ENCODE measurements at regions of chr3 and their contacts with region 1.

Region 1: DNA sequence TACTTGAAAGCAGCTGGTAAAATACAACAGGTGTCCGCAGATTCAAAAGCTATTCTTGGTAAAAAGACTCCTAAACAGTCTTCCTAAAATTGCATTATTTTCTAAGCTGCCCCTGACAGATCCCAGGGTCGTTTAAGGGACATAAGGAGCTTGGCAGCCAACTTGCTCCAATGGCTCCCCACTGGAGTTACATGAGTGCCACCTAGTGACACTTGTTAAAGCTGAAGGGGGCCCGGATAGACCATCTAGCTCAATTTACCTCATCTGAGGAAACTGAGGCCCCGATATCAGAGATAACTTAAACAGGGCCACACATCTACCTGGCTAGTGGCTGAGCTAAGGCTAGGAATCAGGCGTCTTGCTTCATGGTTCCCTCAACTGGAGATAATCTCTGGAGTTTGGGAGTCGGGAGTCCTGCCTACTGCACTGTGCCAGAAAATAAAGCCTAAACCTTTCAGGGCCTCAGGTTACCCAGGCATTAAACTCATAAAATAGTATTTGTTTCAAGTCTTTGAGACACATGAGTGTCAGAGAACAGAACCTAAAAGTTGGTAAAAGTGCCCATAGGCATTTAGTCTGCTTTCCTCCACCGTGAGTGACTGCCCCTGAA is 6.5 kb upstream of the TBC1D23 start:
- DNase-seq: peak; percentile 33 to 63
- ATAC-seq: peak; percentile 85 to 93
- H3K4me3 ChIP-seq: no peak overlapping the region
- H3K27ac ChIP-seq: peak overlapping the region; percentile 28 to 66 (median 64)
- H3K4me1 ChIP-seq: peaks cover 23 to 26% of the 10 kb centered on the region in 2 donors
- H3K27me3 ChIP-seq: no peaks in the 10 kb centered on the region
- CTCF ChIP-seq: peak; percentile 75 to 90 (median 87)
- POLR2A ChIP-seq: no peak

Region 2: GRCh38 chr3:99808151-99808794 is 446.0 kb before region 1 on chr3:
- in situ Hi-C with region 1: no loop called
- intact Hi-C with region 1: no loop called
- DNase-seq: peak in 1 of 2 donors; percentile 30
- ATAC-seq: peak; percentile 52 to 78
- H3K4me3 ChIP-seq: no peak overlapping the region
- H3K27ac ChIP-seq: no peak overlapping the region
- H3K4me1 ChIP-seq: peaks cover 5 to 7% of the 10 kb centered on the region in 2 donors
- H3K27me3 ChIP-seq: no peaks in the 10 kb centered on the region
- CTCF ChIP-seq: peak; percentile 40 to 80 (median 59)
- POLR2A ChIP-seq: no peak

Region 3: DNA sequence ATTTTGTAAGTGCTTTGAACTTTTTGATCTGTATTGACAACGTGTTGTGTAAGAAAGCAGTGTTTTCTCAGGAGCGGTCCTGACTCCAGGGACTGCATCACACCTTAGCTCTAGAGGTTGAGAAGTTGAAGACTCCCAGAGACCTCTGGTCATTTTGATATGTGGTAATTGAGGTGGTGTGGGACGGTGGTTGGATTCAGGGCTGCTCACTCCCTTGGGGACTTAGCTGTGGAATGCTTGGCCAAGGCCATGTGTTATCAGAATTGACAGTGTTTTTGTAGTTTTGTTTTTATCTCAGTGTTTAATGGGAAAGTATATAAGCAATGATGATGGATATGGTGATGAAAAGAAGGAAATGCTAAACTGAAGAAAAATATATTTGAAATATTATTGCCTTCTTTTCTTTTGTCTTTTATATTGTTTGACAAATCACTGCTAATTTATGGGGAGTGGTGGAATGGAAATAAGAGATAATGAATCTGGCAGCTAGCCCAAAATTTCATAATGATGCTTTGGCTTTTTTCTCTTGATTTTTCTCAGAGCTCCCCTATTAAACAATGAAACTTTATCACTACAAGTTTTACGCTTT is 420.6 kb before region 1 on chr3:
- in situ Hi-C with region 1: loop called in 2 of 4 experiments (anchors 5 kb)
- intact Hi-C with region 1: no loop called
- DNase-seq: no peak
- ATAC-seq: no peak
- H3K4me3 ChIP-seq: no peak overlapping the region
- H3K27ac ChIP-seq: peak overlapping the region; percentile 4 to 66 (median 48)
- H3K4me1 ChIP-seq: peaks cover 7 to 12% of the 10 kb centered on the region in 2 donors
- H3K27me3 ChIP-seq: no peaks in the 10 kb centered on the region
- CTCF ChIP-seq: no peak
- POLR2A ChIP-seq: no peak

Region 4: GRCh38 chr3:99981138-99981537 is 273.1 kb before region 1 on chr3:
- in situ Hi-C with region 1: no loop called
- intact Hi-C with region 1: no loop called
- DNase-seq: no peak
- ATAC-seq: no peak
- H3K4me3 ChIP-seq: no peak overlapping the region
- H3K27ac ChIP-seq: peak overlapping the region; percentile 35 to 66 (median 51)
- H3K4me1 ChIP-seq: peaks cover 18 to 20% of the 10 kb centered on the region in 2 donors
- H3K27me3 ChIP-seq: no peaks in the 10 kb centered on the region
- CTCF ChIP-seq: no peak
- POLR2A ChIP-seq: no peak

Region 5: GRCh38 chr3:100068826-100069225 is 185.4 kb before region 1 on chr3:
- in situ Hi-C with region 1: loop called (anchors 5 to 10 kb)
- intact Hi-C with region 1: loop called (anchors 1 kb)
- DNase-seq: peak; percentile 72 to 79
- ATAC-seq: peak; percentile 86 to 89
- H3K4me3 ChIP-seq: peak overlapping the region in 1 of 4 donors; percentile 19
- H3K27ac ChIP-seq: peak overlapping the region; percentile 63 to 80 (median 74)
- H3K4me1 ChIP-seq: peaks cover 44 to 61% of the 10 kb centered on the region in 2 donors
- H3K27me3 ChIP-seq: no peaks in the 10 kb centered on the region
- CTCF ChIP-seq: peak; percentile 67 to 86 (median 78)
- POLR2A ChIP-seq: no peak

Region 6: GRCh38 chr3:100073899-100074307 is 180.4 kb before region 1 on chr3:
- in situ Hi-C with region 1: loop called (anchors 5 to 10 kb)
- intact Hi-C with region 1: loop called (anchors 1 kb)
- DNase-seq: no peak
- ATAC-seq: no peak
- H3K4me3 ChIP-seq: no peak overlapping the region
- H3K27ac ChIP-seq: peak overlapping the region; percentile 63 to 80 (median 70)
- H3K4me1 ChIP-seq: peaks cover 56 to 66% of the 10 kb centered on the region in 2 donors
- H3K27me3 ChIP-seq: no peaks in the 10 kb centered on the region
- CTCF ChIP-seq: no peak
- POLR2A ChIP-seq: no peak

Region 7: DNA sequence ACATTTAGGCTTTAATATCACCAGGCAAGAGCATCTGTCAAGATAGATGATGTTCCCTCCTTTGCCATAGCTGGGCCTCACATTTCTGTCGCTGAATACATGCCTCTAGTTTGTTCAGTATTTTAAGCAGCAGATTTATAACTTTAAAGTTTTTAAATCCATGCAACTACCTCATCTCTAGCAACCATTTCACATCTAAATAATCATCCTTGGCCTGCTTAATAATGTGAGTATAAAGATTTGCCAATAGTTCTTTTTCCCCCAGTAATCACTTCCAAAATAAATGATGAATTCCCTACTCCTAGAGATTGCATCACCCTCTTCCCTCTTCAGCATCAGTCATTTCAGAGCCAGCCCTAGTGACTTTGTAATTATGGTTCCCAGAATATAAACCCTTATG is 103.8 kb before region 1 on chr3:
- in situ Hi-C with region 1: no loop called
- intact Hi-C with region 1: loop called (anchors 5 kb)
- DNase-seq: no peak
- ATAC-seq: peak; percentile 55 to 68
- H3K4me3 ChIP-seq: no peak overlapping the region
- H3K27ac ChIP-seq: peak overlapping the region; percentile 63 to 76 (median 65)
- H3K4me1 ChIP-seq: peaks cover 20 to 25% of the 10 kb centered on the region in 2 donors
- H3K27me3 ChIP-seq: no peaks in the 10 kb centered on the region
- CTCF ChIP-seq: no peak
- POLR2A ChIP-seq: no peak